Activated B cell treated with CpG ODN at 0.5 μM for 24 hours (primary cell): ENCODE measurements at regions of chr9 and their contacts with region 1.

Region 1: DNA sequence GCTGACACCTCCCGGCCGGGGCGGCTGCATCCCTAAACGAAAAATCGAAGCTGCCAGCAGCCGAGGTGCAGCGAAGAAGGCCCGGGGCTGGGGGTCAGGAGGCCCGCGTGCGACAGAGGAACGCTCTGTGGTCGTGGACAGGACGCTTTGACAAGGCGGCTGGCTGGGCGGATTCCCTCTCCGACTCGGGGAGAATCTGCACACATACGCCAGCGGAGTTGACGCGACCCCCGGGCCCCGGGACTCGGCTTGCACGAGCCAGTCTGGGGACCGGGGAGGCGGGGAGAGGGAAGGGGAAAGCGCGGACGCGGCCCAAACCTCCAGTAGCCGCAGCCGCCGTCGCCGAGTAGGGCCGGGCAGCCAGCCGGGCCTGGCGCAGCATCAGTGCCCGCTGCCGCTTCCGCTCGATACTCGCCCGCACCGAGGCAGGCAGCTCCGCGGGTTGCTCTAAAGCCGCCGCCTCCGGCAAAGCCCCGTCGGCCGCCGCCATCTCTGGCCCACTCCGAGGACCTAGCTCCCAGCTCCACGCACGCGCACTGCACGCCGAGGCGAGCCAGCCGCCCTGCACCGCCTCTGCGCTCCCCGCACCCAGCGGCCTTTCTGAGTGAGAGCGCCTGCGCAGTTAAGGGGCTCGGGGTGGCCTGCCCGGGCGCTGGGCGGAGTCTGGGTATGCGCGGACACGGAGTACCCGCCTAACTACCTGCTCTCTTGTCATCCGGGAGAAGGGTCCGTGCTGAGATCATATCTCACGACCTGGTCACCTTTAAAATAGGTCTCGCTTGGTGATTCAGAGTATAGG is at the start of gene XPA:
- DNase-seq: peak; percentile 96
- ATAC-seq: peak; percentile 93
- H3K4me3 Mint-ChIP-seq: peak within 1 kb of the TSS; percentile 90
- H3K27ac Mint-ChIP-seq: peak within 1 kb of the TSS; percentile 94
- H3K4me1 Mint-ChIP-seq: peaks cover 60% of the 10 kb centered on the region
- H3K27me3 Mint-ChIP-seq: peaks cover 5% of the 10 kb centered on the region
- CTCF ChIP-seq: no peak
- total RNA-seq, gene XPA: 14.4 and 18.1 TPM in 2 replicates

Region 2: GRCh38 chr9:96777426-96777864 is 919.6 kb before region 1 on chr9:
- CTCF ChIA-PET with region 1: no interaction called
- POLR2A ChIA-PET with region 1: no interaction called
- intact Hi-C with region 1: loop called (anchors 10 kb)
- DNase-seq: no peak
- ATAC-seq: no peak
- H3K4me3 Mint-ChIP-seq: peak overlapping the region; percentile 99
- H3K27ac Mint-ChIP-seq: peak overlapping the region; percentile 96
- H3K4me1 Mint-ChIP-seq: peaks cover 25% of the 10 kb centered on the region
- H3K27me3 Mint-ChIP-seq: no peaks in the 10 kb centered on the region
- CTCF ChIP-seq: no peak

Region 3: GRCh38 chr9:97759581-97760288 is 62.7 kb after region 1 on chr9:
- CTCF ChIA-PET with region 1: no interaction called
- POLR2A ChIA-PET with region 1: no interaction called
- intact Hi-C with region 1: no loop called
- DNase-seq: no peak
- ATAC-seq: no peak
- H3K4me3 Mint-ChIP-seq: no peak overlapping the region
- H3K27ac Mint-ChIP-seq: no peak overlapping the region
- H3K4me1 Mint-ChIP-seq: no peaks in the 10 kb centered on the region
- H3K27me3 Mint-ChIP-seq: peaks cover 37% of the 10 kb centered on the region
- CTCF ChIP-seq: no peak

Region 4: GRCh38 chr9:97853844-97854695 is 157.1 kb after region 1 on chr9:
- CTCF ChIA-PET with region 1: no interaction called
- POLR2A ChIA-PET with region 1: no interaction called
- intact Hi-C with region 1: loop called (anchors 5 kb)
- DNase-seq: peak; percentile 49
- ATAC-seq: peak; percentile 81
- H3K4me3 Mint-ChIP-seq: peak overlapping the region; percentile 85
- H3K27ac Mint-ChIP-seq: no peak overlapping the region
- H3K4me1 Mint-ChIP-seq: peaks cover 25% of the 10 kb centered on the region
- H3K27me3 Mint-ChIP-seq: peaks cover 62% of the 10 kb centered on the region
- CTCF ChIP-seq: no peak

Region 5: DNA sequence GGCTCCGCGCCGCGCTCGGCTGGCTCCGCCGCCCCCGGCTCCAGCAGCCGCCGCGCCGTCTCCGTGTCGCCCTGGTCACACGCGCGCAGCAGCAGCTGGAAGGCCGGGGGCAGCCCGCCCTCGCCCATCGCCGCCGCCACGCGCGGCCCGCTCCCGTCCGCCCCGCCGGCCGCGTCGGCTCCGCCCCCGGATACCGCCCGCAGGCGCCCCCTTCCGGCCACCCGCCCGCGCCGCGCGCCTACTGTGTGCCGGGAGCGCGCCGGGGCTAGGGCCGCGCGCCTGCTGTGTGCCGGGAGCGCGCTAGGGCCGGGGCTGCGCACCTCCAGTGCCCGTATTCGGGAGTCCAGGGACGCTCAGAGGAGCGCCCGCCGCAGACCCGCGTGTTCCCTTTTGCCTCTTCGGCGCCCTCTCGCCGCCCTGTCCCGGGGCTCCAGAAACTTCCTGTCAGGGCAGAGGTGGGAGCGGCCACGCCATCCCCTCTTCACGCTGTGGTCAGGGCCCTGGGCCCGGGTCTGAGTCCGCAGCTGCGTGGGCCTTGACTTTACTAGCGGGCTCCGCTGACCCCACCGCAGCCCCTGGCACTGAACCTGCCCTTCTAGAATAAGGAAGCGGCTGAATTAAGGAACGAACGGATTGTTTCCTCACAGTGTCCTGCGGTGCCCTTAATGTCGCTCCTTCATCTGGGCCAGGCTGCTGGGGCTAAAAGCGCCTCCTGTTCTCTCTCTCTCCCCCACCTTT is 1099.5 kb after region 1 on chr9 and contains the start of gene ANKS6:
- CTCF ChIA-PET with region 1: no interaction called
- POLR2A ChIA-PET with region 1: no interaction called
- intact Hi-C with region 1: loop called (anchors 10 kb)
- DNase-seq: peak; percentile 91
- ATAC-seq: peak; percentile 94
- H3K4me3 Mint-ChIP-seq: peak within 1 kb of the TSS; percentile 87
- H3K27ac Mint-ChIP-seq: peak within 1 kb of the TSS; percentile 47
- H3K4me1 Mint-ChIP-seq: peaks cover 16% of the 10 kb centered on the region
- H3K27me3 Mint-ChIP-seq: peaks cover 1% of the 10 kb centered on the region
- CTCF ChIP-seq: no peak
- total RNA-seq, gene ANKS6: 12.1 and 14.8 TPM in 2 replicates